ENCODE measurements at regions of chr12 and their contacts with region 1.

Region 1: DNA sequence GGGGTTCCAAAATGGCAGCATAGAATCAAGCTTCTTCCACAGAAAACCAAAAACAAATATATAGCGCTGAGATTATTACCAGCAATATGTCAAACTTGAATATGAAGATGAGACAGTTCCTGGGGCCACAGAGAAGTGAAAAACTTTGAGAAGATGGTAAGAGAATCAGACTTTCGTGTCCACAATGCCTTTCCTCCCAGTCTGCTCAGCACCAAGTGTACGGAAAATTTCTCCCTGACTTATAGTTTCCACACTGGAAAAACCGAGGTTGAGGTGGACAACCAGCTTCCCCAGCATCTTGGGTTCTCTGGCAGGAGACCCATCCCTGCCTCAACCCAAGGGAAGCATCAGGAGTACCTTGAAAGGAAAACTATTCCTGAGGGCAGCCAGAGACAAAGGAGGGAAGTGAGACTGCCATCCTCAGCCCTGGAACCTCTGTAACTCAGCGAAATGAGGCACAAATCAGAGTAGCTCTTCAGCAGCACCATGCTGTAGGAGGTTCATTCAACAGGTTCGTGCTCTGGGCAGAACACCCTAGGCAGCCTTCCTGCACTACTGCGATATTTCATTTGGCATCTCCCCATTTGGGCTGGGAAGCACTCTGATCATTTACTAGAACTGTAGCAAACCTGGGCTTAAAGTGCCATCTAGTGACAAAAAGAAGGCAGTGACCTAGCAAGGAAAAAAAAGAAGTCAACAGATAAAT is 52.4 kb upstream of the CAPRIN2 start:
- DNase-seq: peak; percentile 61
- H3K4me3 ChIP-seq: peak overlapping the region in 1 of 2 experiments; percentile 10; a peak in 1 of 4 replicates
- H3K27ac ChIP-seq: no peak overlapping the region
- H3K4me1 ChIP-seq: peaks cover 0 to 2% of the 10 kb centered on the region in 2 experiments; a peak in 1 of 4 replicates
- H3K27me3 ChIP-seq: no peaks in the 10 kb centered on the region
- CTCF ChIP-seq: peak; percentile 90
- EP300 ChIP-seq: no peak
- RAD21 ChIP-seq: peak; percentile 95

Region 2: DNA sequence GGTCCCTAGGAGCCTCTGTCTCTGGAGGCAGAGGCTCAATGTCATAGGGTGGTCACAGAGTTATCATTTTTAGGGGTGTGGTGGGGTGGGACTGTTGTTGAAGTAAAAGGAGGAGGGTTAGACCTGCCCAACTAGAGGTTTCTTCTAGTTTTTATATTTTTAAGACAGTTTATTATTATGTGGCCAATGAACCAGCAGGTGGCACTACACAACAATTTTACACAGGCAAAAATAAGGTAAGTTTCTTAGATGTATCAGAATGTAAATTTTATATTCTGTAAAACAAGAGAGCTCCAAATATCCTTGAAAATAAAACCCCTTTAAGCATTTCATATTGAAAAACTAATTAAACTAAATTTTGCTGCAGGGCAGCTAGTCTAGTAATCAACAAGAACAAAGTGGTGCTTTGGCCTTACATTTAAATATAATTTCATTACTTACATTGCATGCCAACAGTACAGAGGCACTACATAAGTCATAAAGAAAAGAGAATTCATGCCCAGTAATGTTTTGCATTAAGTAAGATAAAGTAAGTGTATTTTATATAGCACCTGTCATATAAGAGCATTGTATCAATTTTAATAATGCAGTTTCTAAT is 1287.5 kb before region 1 on chr12:
- CTCF ChIA-PET with region 1: interaction called, 32 read pairs
- POLR2A ChIA-PET with region 1: no interaction called
- DNase-seq: peak; percentile 32
- H3K4me3 ChIP-seq: peak overlapping the region in 1 of 2 experiments; percentile 30; a peak in 1 of 4 replicates
- H3K27ac ChIP-seq: no peak overlapping the region; a peak in 1 of 4 replicates
- H3K4me1 ChIP-seq: no peaks in the 10 kb centered on the region; a peak in 1 of 4 replicates
- H3K27me3 ChIP-seq: no peaks in the 10 kb centered on the region
- CTCF ChIP-seq: peak; percentile 84
- EP300 ChIP-seq: no peak
- RAD21 ChIP-seq: peak; percentile 79

Region 3: DNA sequence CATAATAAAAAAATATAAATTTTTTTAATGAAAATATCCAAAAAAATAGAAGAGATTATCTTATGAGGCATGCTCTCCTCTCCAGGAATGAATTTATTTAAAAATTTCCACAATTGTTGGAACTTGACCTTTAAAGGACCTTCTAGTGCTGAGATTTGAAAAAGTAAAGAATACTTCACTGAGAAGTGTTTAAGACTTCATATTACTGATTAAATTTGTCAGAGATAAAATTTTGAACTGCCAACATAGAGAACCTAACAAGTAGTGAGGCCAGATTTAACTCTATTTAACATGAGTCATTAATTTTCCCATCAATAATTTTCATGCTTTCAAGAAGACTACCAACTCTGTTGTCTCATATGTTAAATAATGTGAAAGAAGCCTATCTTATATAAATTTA is 66.9 kb before region 1 on chr12:
- CTCF ChIA-PET with region 1: no interaction called
- POLR2A ChIA-PET with region 1: no interaction called
- DNase-seq: no peak
- H3K4me3 ChIP-seq: no peak overlapping the region
- H3K27ac ChIP-seq: no peak overlapping the region
- H3K4me1 ChIP-seq: no peaks in the 10 kb centered on the region
- H3K27me3 ChIP-seq: no peaks in the 10 kb centered on the region
- CTCF ChIP-seq: no peak
- EP300 ChIP-seq: no peak
- RAD21 ChIP-seq: no peak

Region 4: GRCh38 chr12:30795410-30796312 is 11.5 kb before region 1 on chr12:
- CTCF ChIA-PET with region 1: interaction called, 23 read pairs
- POLR2A ChIA-PET with region 1: no interaction called
- DNase-seq: peak; percentile 30
- H3K4me3 ChIP-seq: peak overlapping the region; percentile 66 to 76
- H3K27ac ChIP-seq: peak overlapping the region; percentile 56 to 98
- H3K4me1 ChIP-seq: peaks cover 9 to 43% of the 10 kb centered on the region in 2 experiments; a peak in 3 of 4 replicates
- H3K27me3 ChIP-seq: no peaks in the 10 kb centered on the region
- CTCF ChIP-seq: peak; percentile 19
- EP300 ChIP-seq: no peak
- RAD21 ChIP-seq: no peak

Region 5: DNA sequence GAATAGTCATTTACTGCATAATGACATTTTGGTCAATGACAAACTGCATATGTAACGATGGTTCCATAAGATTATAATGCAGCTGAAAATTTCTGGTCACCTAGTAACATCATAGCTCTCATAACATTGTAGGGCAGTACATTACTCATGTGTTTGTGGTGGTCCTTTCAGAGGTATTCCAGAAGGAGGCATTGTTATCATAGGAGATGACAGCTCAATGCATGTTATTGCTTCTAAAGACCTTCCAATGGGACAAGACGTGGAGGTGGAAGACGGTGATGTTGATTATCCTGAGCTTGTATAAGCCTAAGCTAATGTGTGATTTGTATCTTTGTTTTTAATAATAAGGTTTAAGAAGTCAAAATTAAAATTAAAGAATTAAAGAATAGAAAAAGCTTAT is 75.6 kb after region 1 on chr12:
- CTCF ChIA-PET with region 1: no interaction called
- POLR2A ChIA-PET with region 1: no interaction called
- DNase-seq: no peak
- H3K4me3 ChIP-seq: no peak overlapping the region
- H3K27ac ChIP-seq: no peak overlapping the region
- H3K4me1 ChIP-seq: no peaks in the 10 kb centered on the region
- H3K27me3 ChIP-seq: no peaks in the 10 kb centered on the region; the same call in 1 of the 2 replicates
- CTCF ChIP-seq: peak; percentile 40
- EP300 ChIP-seq: no peak
- RAD21 ChIP-seq: peak; percentile 78

Region 6: GRCh38 chr12:31353750-31354708 is 546.9 kb after region 1 on chr12:
- CTCF ChIA-PET with region 1: no interaction called
- POLR2A ChIA-PET with region 1: no interaction called
- DNase-seq: no peak
- H3K4me3 ChIP-seq: no peak overlapping the region
- H3K27ac ChIP-seq: no peak overlapping the region
- H3K4me1 ChIP-seq: no peaks in the 10 kb centered on the region
- H3K27me3 ChIP-seq: no peaks in the 10 kb centered on the region
- CTCF ChIP-seq: no peak
- EP300 ChIP-seq: no peak
- RAD21 ChIP-seq: no peak